Naive thymus-derived CD4-positive, alpha-beta T cell (primary cell): ENCODE measurements at regions of chr15 and their contacts with region 1.

Region 1: GRCh38 chr15:60520825-60521368 is 42.0 kb upstream of the ICE2 start:
- DNase-seq: peak; percentile 50 to 75 (median 67)
- ATAC-seq: peak; percentile 94
- H3K4me3 ChIP-seq: no peak overlapping the region
- H3K4me3 Mint-ChIP-seq: peak overlapping the region in 2 of 10 donors; percentile 1 to 25
- H3K27ac ChIP-seq: no peak overlapping the region
- H3K27ac Mint-ChIP-seq: peak overlapping the region; percentile 1 to 85 (median 59)
- H3K4me1 ChIP-seq: peaks cover 7 to 13% of the 10 kb centered on the region in 2 donors
- H3K4me1 Mint-ChIP-seq: peaks cover 36 to 64% (median 63%) of the 10 kb centered on the region in 7 donors
- H3K27me3 ChIP-seq: no peaks in the 10 kb centered on the region
- H3K27me3 Mint-ChIP-seq: no peaks in the 10 kb centered on the region

Region 2: DNA sequence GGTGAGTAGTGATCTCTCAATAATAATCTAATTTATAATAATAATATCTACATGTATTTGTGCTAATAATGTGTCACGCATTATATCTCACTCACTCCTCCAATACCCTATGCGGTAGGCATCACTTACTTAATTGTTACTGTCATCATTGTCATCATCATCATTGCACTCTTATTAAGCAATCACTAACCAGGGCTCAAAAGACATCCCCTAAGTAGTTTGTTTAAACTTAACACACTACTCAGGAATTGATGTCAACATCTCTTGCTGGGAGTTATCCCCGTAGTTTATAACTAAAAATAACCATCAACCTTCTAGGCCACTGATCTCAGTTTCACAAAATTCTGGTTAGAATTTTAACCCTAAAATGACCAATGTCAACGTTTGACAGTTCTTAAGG is 14.8 kb after region 1 on chr15:
- CTCF ChIA-PET with region 1: interaction called, 15 read pairs
- POLR2A ChIA-PET with region 1: interaction called, 4 read pairs
- intact Hi-C with region 1: no loop called
- DNase-seq: no peak
- ATAC-seq: no peak
- H3K4me3 ChIP-seq: no peak overlapping the region
- H3K4me3 Mint-ChIP-seq: peak overlapping the region in 1 of 10 donors; percentile 17
- H3K27ac ChIP-seq: no peak overlapping the region
- H3K27ac Mint-ChIP-seq: peak overlapping the region in 3 of 9 donors; percentile 8 to 72 (median 11)
- H3K4me1 ChIP-seq: peaks cover 35 to 49% of the 10 kb centered on the region in 2 donors
- H3K4me1 Mint-ChIP-seq: peaks cover 55 to 98% (median 92%) of the 10 kb centered on the region in 7 donors
- H3K27me3 ChIP-seq: no peaks in the 10 kb centered on the region
- H3K27me3 Mint-ChIP-seq: no peaks in the 10 kb centered on the region

Region 3: DNA sequence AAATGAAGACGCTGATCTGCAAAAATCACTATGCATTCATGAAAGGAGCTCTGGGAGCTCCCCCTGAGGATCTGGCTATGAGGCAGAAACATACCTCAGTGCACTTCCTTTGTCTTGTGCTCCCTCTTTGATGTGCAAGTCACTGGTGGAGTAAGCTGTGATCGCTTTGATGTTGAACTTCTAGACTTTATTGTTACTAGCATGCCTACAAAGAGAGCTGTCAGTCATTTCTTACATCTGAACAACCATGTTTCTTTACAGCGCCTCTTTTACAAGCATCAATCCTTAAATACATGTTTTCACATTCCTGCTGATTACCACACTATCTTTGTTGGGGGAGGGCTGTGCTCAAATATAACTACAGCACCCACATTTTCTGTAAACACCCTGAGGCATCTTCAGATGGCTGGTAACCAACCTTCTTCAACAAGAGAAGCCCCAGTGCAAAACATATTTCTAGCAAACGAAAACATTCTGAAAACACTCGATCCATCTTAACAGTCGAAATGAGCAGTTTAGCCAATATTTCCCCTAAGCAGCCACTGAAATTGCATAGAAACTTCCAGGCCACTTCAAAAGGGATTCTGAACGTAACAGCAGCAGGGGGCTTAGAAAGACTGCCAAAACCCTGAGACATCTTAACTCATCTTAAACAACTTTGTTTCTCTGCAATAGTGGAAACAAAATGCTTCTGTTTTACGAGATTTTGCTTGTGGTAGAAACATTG is 59.9 kb after region 1 on chr15:
- CTCF ChIA-PET with region 1: interaction called, 25 read pairs
- POLR2A ChIA-PET with region 1: interaction called, 12 read pairs
- intact Hi-C with region 1: loop called (anchors 2 kb)
- DNase-seq: peak in 7 of 9 donors; percentile 72 to 90 (median 86)
- ATAC-seq: peak; percentile 91
- H3K4me3 ChIP-seq: peak overlapping the region; percentile 33
- H3K4me3 Mint-ChIP-seq: peak overlapping the region; percentile 72 to 88 (median 85)
- H3K27ac ChIP-seq: peak overlapping the region; percentile 82
- H3K27ac Mint-ChIP-seq: peak overlapping the region; percentile 90 to 98 (median 96)
- H3K4me1 ChIP-seq: peaks cover 78 to 80% of the 10 kb centered on the region in 2 donors
- H3K4me1 Mint-ChIP-seq: peaks cover 58 to 99% (median 91%) of the 10 kb centered on the region in 7 donors
- H3K27me3 ChIP-seq: no peaks in the 10 kb centered on the region
- H3K27me3 Mint-ChIP-seq: no peaks in the 10 kb centered on the region

Region 4: GRCh38 chr15:60859996-60860494 is 339.1 kb after region 1 on chr15:
- CTCF ChIA-PET with region 1: interaction called, 6 read pairs
- POLR2A ChIA-PET with region 1: interaction called, 3 read pairs
- intact Hi-C with region 1: loop called in 1 of 2 experiments (anchors 5 kb)
- DNase-seq: no peak
- ATAC-seq: peak; percentile 48
- H3K4me3 ChIP-seq: no peak overlapping the region
- H3K4me3 Mint-ChIP-seq: peak overlapping the region in 1 of 10 donors; percentile 21
- H3K27ac ChIP-seq: no peak overlapping the region
- H3K27ac Mint-ChIP-seq: no peak overlapping the region
- H3K4me1 ChIP-seq: peaks cover 6 to 9% of the 10 kb centered on the region in 2 donors
- H3K4me1 Mint-ChIP-seq: peaks cover 4 to 29% (median 25%) of the 10 kb centered on the region in 7 donors
- H3K27me3 ChIP-seq: no peaks in the 10 kb centered on the region
- H3K27me3 Mint-ChIP-seq: no peaks in the 10 kb centered on the region

Region 5: GRCh38 chr15:61634837-61635236 is 1113.9 kb after region 1 on chr15:
- CTCF ChIA-PET with region 1: no interaction called
- POLR2A ChIA-PET with region 1: no interaction called
- intact Hi-C with region 1: no loop called
- DNase-seq: no peak
- ATAC-seq: no peak
- H3K4me3 ChIP-seq: no peak overlapping the region
- H3K4me3 Mint-ChIP-seq: no peak overlapping the region
- H3K27ac ChIP-seq: no peak overlapping the region
- H3K27ac Mint-ChIP-seq: no peak overlapping the region
- H3K4me1 ChIP-seq: no peaks in the 10 kb centered on the region
- H3K4me1 Mint-ChIP-seq: no peaks in the 10 kb centered on the region
- H3K27me3 ChIP-seq: no peaks in the 10 kb centered on the region
- H3K27me3 Mint-ChIP-seq: peaks cover 16 to 46% (median 36%) of the 10 kb centered on the region in 5 donors